B cell (primary cell): ENCODE measurements at regions of chr7 and their contacts with region 1.

Region 1: DNA sequence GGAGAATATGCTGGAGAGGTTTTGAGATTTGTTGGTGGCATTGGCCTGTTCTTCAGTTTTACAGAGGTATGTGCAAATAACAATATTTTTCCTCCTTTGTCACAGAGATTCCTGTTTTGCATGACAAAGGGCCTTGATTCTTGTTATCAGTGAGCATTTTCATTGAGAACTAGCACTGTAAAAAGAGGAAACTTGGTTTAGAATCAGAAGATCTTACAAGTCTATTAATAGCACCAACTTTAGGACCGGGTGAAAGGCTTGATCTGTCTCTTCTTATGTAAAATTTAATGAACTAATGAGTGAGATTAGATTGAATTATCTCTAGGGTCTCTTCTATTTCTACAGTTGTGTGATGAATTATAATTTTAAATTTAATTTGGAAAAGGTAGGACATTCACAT is 25.5 kb downstream of the TSPAN13 start:
- DNase-seq: no peak
- ATAC-seq: no peak
- H3K4me3 ChIP-seq: no peak overlapping the region
- H3K4me3 Mint-ChIP-seq: no peak overlapping the region
- H3K27ac ChIP-seq: no peak overlapping the region
- H3K27ac Mint-ChIP-seq: no peak overlapping the region
- H3K4me1 ChIP-seq: peaks cover 10 to 30% of the 10 kb centered on the region in 2 donors
- H3K4me1 Mint-ChIP-seq: peaks cover 33% of the 10 kb centered on the region
- H3K27me3 ChIP-seq: no peaks in the 10 kb centered on the region
- H3K27me3 Mint-ChIP-seq: no peaks in the 10 kb centered on the region
- CTCF ChIP-seq: no peak

Region 2: GRCh38 chr7:16668049-16668858 is 110.8 kb before region 1 on chr7:
- CTCF ChIA-PET with region 1: no interaction called
- POLR2A ChIA-PET with region 1: no interaction called
- intact Hi-C with region 1: no loop called
- DNase-seq: no peak
- ATAC-seq: no peak
- H3K4me3 ChIP-seq: no peak overlapping the region
- H3K4me3 Mint-ChIP-seq: no peak overlapping the region
- H3K27ac ChIP-seq: no peak overlapping the region
- H3K27ac Mint-ChIP-seq: no peak overlapping the region
- H3K4me1 ChIP-seq: no peaks in the 10 kb centered on the region
- H3K4me1 Mint-ChIP-seq: peaks cover 2% of the 10 kb centered on the region
- H3K27me3 ChIP-seq: no peaks in the 10 kb centered on the region
- H3K27me3 Mint-ChIP-seq: no peaks in the 10 kb centered on the region
- CTCF ChIP-seq: no peak

Region 3: GRCh38 chr7:16762177-16762576 is 16.9 kb before region 1 on chr7:
- CTCF ChIA-PET with region 1: interaction called, 3 read pairs
- POLR2A ChIA-PET with region 1: no interaction called
- intact Hi-C with region 1: loop called (anchors 2 kb)
- DNase-seq: no peak
- ATAC-seq: no peak
- H3K4me3 ChIP-seq: no peak overlapping the region
- H3K4me3 Mint-ChIP-seq: no peak overlapping the region
- H3K27ac ChIP-seq: peak overlapping the region; percentile 15 to 87
- H3K27ac Mint-ChIP-seq: peak overlapping the region; percentile 57
- H3K4me1 ChIP-seq: peaks cover 58 to 87% of the 10 kb centered on the region in 2 donors
- H3K4me1 Mint-ChIP-seq: peaks cover 83% of the 10 kb centered on the region
- H3K27me3 ChIP-seq: no peaks in the 10 kb centered on the region
- H3K27me3 Mint-ChIP-seq: no peaks in the 10 kb centered on the region
- CTCF ChIP-seq: no peak